ENCODE measurements at regions of chr1 and their contacts with region 1.

Region 1: DNA sequence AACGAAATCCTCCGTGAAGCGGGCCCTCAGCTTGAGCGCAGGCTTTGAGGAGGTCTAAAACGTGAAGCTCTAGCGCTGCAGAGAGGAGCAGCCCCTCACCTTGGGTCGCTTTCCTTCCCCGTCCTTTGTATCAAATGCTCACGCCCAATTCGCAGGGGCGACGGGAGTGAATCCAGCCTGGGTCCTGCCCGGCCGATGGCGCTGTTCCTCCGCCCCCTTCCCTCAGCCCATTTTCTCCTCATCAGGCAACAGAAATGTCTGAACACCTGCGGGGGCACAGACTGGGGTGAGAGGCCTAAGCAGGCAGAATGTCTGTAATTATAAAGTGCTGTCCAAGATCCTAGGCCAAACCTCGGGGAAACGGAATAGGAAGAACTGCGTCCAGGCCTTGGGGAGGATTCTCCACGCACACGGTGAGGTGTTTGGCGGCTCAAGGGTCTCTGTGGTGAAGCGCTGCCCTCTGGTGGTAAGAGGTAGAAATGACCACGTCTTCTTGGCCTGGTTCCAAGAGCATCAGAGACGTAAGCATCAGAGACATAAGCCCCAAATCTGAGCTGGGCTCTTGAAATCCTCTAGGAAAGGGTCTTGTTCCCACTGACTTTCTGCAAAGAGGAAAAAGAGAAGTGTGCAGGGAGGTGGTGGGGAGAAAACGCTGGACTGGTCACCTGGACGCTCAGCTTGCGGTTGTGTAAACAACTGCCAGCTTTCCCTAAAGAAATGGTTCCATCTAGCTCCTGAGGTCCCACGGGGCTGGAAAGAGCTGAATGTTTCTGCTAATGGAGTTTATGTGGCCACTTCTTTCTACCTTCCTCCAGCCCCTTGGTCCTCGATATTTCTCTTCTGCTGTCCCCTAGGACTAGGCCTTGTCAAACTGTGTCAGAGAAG is 92.1 kb upstream of the CD53 start:
- DNase-seq: peak; percentile 93
- H3K4me3 Mint-ChIP-seq: peak overlapping the region; percentile 14
- H3K27ac Mint-ChIP-seq: no peak overlapping the region
- H3K4me1 Mint-ChIP-seq: peaks cover 22% of the 10 kb centered on the region
- H3K27me3 Mint-ChIP-seq: peaks cover 16% of the 10 kb centered on the region

Region 2: GRCh38 chr1:110407260-110408210 is 373.3 kb before region 1 on chr1 and contains the start of gene LAMTOR5:
- intact Hi-C with region 1: loop called (anchors 10 kb)
- DNase-seq: peak; percentile 98
- H3K4me3 Mint-ChIP-seq: peak within 1 kb of the TSS; percentile 99
- H3K27ac Mint-ChIP-seq: peak within 1 kb of the TSS; percentile 98
- H3K4me1 Mint-ChIP-seq: peaks cover 17% of the 10 kb centered on the region
- H3K27me3 Mint-ChIP-seq: no peaks in the 10 kb centered on the region
- total RNA-seq, gene LAMTOR5: 170 and 180 TPM in 2 replicates

Region 3: GRCh38 chr1:110554871-110555801 is 225.7 kb before region 1 on chr1:
- intact Hi-C with region 1: loop called (anchors 10 kb)
- DNase-seq: peak; percentile 86
- H3K4me3 Mint-ChIP-seq: no peak overlapping the region
- H3K27ac Mint-ChIP-seq: no peak overlapping the region
- H3K4me1 Mint-ChIP-seq: no peaks in the 10 kb centered on the region
- H3K27me3 Mint-ChIP-seq: peaks cover 67% of the 10 kb centered on the region

Region 4: GRCh38 chr1:110766025-110766647 is 14.7 kb before region 1 on chr1:
- intact Hi-C with region 1: loop called (anchors 1 kb)
- DNase-seq: peak; percentile 86
- H3K4me3 Mint-ChIP-seq: peak overlapping the region; percentile 2
- H3K27ac Mint-ChIP-seq: no peak overlapping the region
- H3K4me1 Mint-ChIP-seq: peaks cover 9% of the 10 kb centered on the region
- H3K27me3 Mint-ChIP-seq: peaks cover 33% of the 10 kb centered on the region

Region 5: DNA sequence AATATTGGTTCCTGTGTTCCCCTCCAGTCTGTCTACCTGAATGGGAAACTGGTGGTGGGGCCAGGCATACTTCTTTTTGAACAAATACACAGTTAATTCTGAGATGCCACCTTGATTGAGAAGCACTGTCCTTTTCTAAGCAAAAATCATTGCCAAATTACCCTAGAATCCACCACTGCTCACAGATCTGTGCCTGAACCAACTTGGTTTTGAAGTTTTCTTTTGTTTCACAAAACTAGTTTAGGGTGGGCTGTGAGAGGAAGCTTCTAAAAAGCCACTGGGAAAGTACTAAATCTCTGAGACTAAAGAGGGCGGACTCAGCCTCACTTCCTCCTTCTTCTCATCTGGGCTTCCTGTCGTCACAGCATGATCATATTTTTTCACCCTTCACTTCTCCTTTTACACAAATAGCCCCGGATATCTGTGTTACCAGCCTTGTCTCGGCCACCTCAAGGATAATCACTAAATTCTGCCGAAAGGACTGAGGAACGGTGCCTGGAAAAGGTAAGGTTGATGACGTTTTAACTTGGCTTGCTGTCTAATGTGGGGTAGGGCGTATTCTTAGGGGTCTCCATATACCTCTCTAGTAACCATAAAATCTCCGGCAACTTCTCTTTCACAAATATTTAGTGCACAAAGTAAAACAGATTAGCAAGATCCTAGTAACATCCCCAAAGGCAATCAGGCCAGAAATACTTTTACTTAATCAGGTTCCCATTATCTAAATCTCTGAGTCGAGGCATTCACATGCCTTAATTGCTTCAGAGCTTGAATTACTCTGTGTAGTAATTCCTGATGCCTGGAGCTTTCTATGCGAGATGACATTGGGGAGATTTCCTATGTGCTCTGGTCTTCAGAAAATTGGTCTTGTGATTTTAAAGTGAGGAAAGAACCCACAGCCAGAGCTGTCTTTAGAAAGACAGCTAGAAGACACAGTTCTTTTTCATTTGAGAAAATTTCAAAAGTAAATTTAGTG is 92.2 kb after region 1 on chr1 and contains the start of gene CD53:
- intact Hi-C with region 1: no loop called
- DNase-seq: peak; percentile 87
- H3K4me3 Mint-ChIP-seq: peak within 1 kb of the TSS; percentile 98
- H3K27ac Mint-ChIP-seq: peak within 1 kb of the TSS; percentile 97
- H3K4me1 Mint-ChIP-seq: peaks cover 34% of the 10 kb centered on the region
- H3K27me3 Mint-ChIP-seq: no peaks in the 10 kb centered on the region
- total RNA-seq, gene CD53: 185 and 190 TPM in 2 replicates

Region 6: GRCh38 chr1:110990536-110990935 is 209.7 kb after region 1 on chr1:
- intact Hi-C with region 1: loop called (anchors 1 kb)
- DNase-seq: no peak
- H3K4me3 Mint-ChIP-seq: no peak overlapping the region
- H3K27ac Mint-ChIP-seq: no peak overlapping the region
- H3K4me1 Mint-ChIP-seq: peaks cover 2% of the 10 kb centered on the region
- H3K27me3 Mint-ChIP-seq: peaks cover 47% of the 10 kb centered on the region